Sigmoid colon (tissue), 7 donors: ENCODE measurements at regions of chr15 and their contacts with region 1.

Region 1: DNA sequence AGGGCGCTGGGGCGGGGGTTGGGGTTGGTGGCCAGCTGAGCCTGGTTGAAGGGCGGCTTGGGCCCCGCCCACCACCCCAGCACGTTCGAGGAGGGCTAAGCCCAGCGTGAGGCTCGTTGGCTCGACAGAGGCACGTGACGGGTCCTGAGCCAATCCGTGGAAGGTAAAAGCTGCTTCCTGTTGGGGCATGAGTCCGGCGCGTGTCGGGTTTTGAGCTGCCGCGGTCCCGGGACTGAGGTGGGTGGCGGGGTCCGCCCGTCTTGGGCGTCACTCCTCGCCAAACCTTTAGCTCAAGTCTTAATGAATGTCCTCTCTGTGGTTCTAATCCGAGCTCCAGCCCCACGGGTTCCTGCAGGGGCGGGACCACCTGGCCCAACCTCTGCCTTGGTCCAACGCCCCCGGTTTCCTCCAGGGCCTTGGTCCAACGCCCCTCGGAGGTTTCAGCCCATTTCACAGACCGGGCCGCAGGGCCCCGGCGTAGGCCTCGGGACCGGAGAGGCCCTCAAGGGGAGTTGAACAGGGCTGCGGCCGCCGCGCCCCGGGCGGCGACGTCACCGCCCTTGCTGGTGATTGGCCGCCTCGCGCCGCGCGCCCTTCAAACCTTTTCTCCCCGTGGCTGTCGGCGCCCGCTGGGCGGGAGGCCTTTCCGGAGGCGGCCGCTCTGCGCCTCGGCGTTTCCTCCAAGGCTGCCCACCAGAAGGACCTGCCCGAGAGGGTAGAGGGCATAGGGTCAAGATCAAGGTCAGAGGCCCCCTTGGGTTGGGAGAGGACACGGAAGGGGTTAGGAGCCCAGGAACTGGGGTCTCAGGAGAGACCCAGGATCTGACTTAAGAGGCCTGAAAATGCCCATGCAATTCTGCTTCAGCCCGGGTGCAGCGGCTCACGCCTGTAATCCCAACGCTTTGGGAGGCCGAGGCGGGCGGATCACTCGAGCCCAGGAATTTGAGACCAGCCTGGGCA is at the start of gene RCCD1:
- DNase-seq: peak; percentile 99
- H3K4me3 ChIP-seq: peak within 1 kb of the TSS; percentile 81 to 93 (median 88)
- H3K27ac ChIP-seq: peak within 1 kb of the TSS; percentile 95 to 99 (median 96)
- H3K4me1 ChIP-seq: peaks cover 0 to 48% (median 41%) of the 10 kb centered on the region in 4 donors
- H3K27me3 ChIP-seq: no peaks in the 10 kb centered on the region
- CTCF ChIP-seq: no peak
- EP300 ChIP-seq: no peak
- POLR2A ChIP-seq: peak; percentile 17 to 36
- total RNA-seq, gene RCCD1: 5.2 to 8.0 (median 6.7) TPM

Region 2: DNA sequence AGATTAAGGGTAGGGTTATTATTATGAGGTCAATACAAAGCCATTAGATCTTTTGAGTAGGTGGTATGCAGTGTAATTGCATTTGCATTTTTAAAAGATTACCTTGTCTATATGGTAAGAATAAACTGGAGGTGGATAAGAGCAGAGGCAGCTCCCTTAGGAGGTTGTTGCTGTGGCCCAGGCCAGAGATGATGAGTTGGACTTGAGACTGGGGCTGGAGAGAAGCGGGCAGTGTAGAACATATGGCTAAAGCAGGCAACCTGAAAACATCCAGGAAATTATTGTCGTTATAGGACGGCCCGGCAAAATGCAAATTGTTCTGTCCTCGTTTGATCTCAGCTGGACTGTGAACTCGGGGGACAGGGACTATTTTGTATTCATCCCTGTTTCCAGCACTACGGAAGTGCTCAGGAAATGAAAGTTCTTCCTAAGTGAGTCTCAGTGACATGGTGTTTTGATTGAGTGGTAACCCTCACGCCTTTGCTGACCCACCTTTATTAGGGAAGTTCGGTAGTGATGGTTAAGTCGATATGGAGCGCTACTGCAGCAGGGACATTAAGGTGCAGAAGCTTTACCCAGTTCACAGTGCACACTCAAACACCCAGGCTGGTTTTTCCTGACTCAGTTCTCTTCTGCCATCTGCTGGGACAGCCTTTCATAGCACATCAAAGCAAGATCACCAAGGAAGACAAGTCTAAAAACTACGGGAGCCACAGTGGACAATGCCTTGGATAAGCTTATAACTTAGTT is 94.6 kb after region 1 on chr15:
- intact Hi-C with region 1: loop called (anchors 2 kb)
- DNase-seq: peak; percentile 73
- H3K4me3 ChIP-seq: no peak overlapping the region
- H3K27ac ChIP-seq: no peak overlapping the region
- H3K4me1 ChIP-seq: no peaks in the 10 kb centered on the region
- H3K27me3 ChIP-seq: peaks cover 0 to 9% (median 0%) of the 10 kb centered on the region in 3 donors
- CTCF ChIP-seq: peak; percentile 43 to 62 (median 50)
- EP300 ChIP-seq: no peak
- POLR2A ChIP-seq: no peak